K562 (cell line): ENCODE measurements at regions of chr19 and their contacts with region 1.

Region 1: GRCh38 chr19:38315657-38316476 is at the start of gene YIF1B:
- DNase-seq: peak; percentile 97 to 98 (median 97)
- ATAC-seq: peak; percentile 88
- H3K4me3 ChIP-seq: peak within 1 kb of the TSS; percentile 90
- H3K27ac ChIP-seq: peak within 1 kb of the TSS; percentile 99
- H3K4me1 ChIP-seq: peaks cover 42 to 64% of the 10 kb centered on the region in 2 experiments
- H3K27me3 ChIP-seq: no peaks in the 10 kb centered on the region
- CTCF ChIP-seq: no peak
- EP300 ChIP-seq: no peak; the same call in 1 of the 2 replicates
- POLR2A ChIP-seq: peak; percentile 44
- RAD21 ChIP-seq: no peak
- polyA plus RNA-seq, gene YIF1B: 8.5 to 84.7 TPM

Region 2: GRCh38 chr19:38255383-38256014 is 60.4 kb before region 1 on chr19:
- CTCF ChIA-PET with region 1: no interaction called
- POLR2A ChIA-PET with region 1: interaction called, 3 read pairs
- in situ Hi-C with region 1: no loop called
- intact Hi-C with region 1: loop called (anchors 1 kb)
- DNase-seq: peak; percentile 61 to 86 (median 70)
- ATAC-seq: peak; percentile 63
- H3K4me3 ChIP-seq: peak overlapping the region; percentile 57
- H3K27ac ChIP-seq: peak overlapping the region; percentile 82
- H3K4me1 ChIP-seq: peaks cover 10 to 54% of the 10 kb centered on the region in 2 experiments; a peak in 4 of 5 replicates
- H3K27me3 ChIP-seq: no peaks in the 10 kb centered on the region
- CTCF ChIP-seq: no peak
- EP300 ChIP-seq: no peak
- POLR2A ChIP-seq: no peak
- RAD21 ChIP-seq: no peak

Region 3: GRCh38 chr19:38270587-38271167 is 45.2 kb before region 1 on chr19:
- CTCF ChIA-PET with region 1: no interaction called
- POLR2A ChIA-PET with region 1: interaction called, 3 read pairs
- in situ Hi-C with region 1: no loop called
- intact Hi-C with region 1: loop called (anchors 1 kb)
- DNase-seq: peak; percentile 74 to 92 (median 82)
- ATAC-seq: peak; percentile 83
- H3K4me3 ChIP-seq: peak overlapping the region; percentile 7; the same call in 1 of the 2 replicates
- H3K27ac ChIP-seq: peak overlapping the region; percentile 85
- H3K4me1 ChIP-seq: peaks cover 47 to 53% of the 10 kb centered on the region in 2 experiments
- H3K27me3 ChIP-seq: no peaks in the 10 kb centered on the region
- CTCF ChIP-seq: no peak
- EP300 ChIP-seq: peak; percentile 60; the same call in 1 of the 2 replicates
- POLR2A ChIP-seq: no peak
- RAD21 ChIP-seq: no peak

Region 4: GRCh38 chr19:38303517-38304349 is 12.1 kb before region 1 on chr19 and contains the start of gene C19orf33:
- CTCF ChIA-PET with region 1: no interaction called
- POLR2A ChIA-PET with region 1: interaction called, 12 read pairs
- in situ Hi-C with region 1: no loop called
- intact Hi-C with region 1: no loop called
- DNase-seq: peak in 2 of 4 experiments; percentile 36 to 47
- ATAC-seq: peak; percentile 10
- H3K4me3 ChIP-seq: no peak within 1 kb of the TSS
- H3K27ac ChIP-seq: no peak within 1 kb of the TSS
- H3K4me1 ChIP-seq: peaks cover 22 to 57% of the 10 kb centered on the region in 2 experiments
- H3K27me3 ChIP-seq: no peaks in the 10 kb centered on the region
- CTCF ChIP-seq: no peak
- EP300 ChIP-seq: no peak
- POLR2A ChIP-seq: no peak
- RAD21 ChIP-seq: no peak
- polyA plus RNA-seq, gene C19orf33: not detected

Region 5: GRCh38 chr19:38346837-38347236 is 31.0 kb after region 1 on chr19:
- CTCF ChIA-PET with region 1: no interaction called
- POLR2A ChIA-PET with region 1: no interaction called
- in situ Hi-C with region 1: no loop called
- intact Hi-C with region 1: no loop called
- DNase-seq: no peak
- ATAC-seq: no peak
- H3K4me3 ChIP-seq: no peak overlapping the region
- H3K27ac ChIP-seq: no peak overlapping the region
- H3K4me1 ChIP-seq: peaks cover 0 to 5% of the 10 kb centered on the region in 2 experiments; a peak in 2 of 5 replicates
- H3K27me3 ChIP-seq: no peaks in the 10 kb centered on the region
- CTCF ChIP-seq: no peak
- EP300 ChIP-seq: no peak
- POLR2A ChIP-seq: no peak
- RAD21 ChIP-seq: no peak